ENCODE measurements at regions of chr14 and their contacts with region 1.

Region 1: GRCh38 chr14:35292051-35292769 is at the start of gene PSMA6:
- DNase-seq: peak; percentile 100
- ATAC-seq: peak; percentile 93
- H3K4me3 ChIP-seq: peak within 1 kb of the TSS; percentile 90
- H3K27ac ChIP-seq: peak within 1 kb of the TSS; percentile 74
- H3K4me1 ChIP-seq: peaks cover 9% of the 10 kb centered on the region; the same call in 1 of the 2 replicates
- H3K27me3 ChIP-seq: no peaks in the 10 kb centered on the region
- CTCF ChIP-seq: no peak
- total RNA-seq, gene PSMA6: 307 and 308 TPM in 2 replicates

Region 2: DNA sequence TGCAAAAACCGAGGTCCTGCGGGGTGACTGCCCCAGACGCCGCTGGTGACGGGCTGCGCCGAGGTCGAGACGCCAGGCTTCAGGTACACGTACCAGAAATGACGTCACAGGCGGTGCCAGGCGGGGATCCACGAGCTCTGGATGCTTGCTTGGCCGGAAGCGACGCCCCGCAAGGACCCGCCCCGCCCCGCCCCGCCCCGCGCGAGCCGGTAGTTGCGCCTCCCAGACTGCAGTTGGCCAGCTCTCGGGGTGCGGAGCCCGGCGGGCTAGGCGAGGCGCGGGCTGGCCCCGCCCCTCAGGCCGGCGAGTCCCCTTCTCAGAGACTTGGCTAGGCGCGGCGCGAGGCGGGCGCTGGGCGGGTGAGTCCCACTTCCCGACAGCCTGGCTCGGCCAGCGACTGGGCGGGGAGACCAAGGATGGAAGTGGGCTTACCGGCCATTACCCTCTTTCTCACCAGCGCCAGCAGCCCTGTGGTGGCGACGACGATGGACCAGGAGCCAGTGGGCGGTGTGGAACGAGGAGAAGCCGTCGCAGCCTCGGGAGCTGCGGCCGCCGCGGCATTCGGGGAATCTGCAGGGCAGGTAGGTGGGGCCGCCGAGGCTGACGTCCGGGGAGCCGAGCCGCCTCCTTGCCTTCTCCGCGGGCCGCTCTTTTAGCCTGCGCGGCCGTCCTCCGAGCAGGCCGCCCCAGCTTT is 246.0 kb before region 1 on chr14 and contains the start of gene FAM177A1:
- CTCF ChIA-PET with region 1: no interaction called
- POLR2A ChIA-PET with region 1: interaction called, 20 read pairs
- intact Hi-C with region 1: no loop called
- DNase-seq: peak; percentile 96
- ATAC-seq: peak; percentile 87
- H3K4me3 ChIP-seq: peak within 1 kb of the TSS; percentile 87
- H3K27ac ChIP-seq: peak within 1 kb of the TSS; percentile 75
- H3K4me1 ChIP-seq: peaks cover 32% of the 10 kb centered on the region
- H3K27me3 ChIP-seq: no peaks in the 10 kb centered on the region
- CTCF ChIP-seq: no peak
- total RNA-seq, gene FAM177A1: 36.2 and 62.8 TPM in 2 replicates

Region 3: GRCh38 chr14:35159742-35160409 is 132.3 kb before region 1 on chr14:
- CTCF ChIA-PET with region 1: no interaction called
- POLR2A ChIA-PET with region 1: interaction called, 8 read pairs
- intact Hi-C with region 1: loop called (anchors 5 kb)
- DNase-seq: peak; percentile 97
- ATAC-seq: peak; percentile 99
- H3K4me3 ChIP-seq: peak overlapping the region; percentile 49
- H3K27ac ChIP-seq: peak overlapping the region; percentile 95
- H3K4me1 ChIP-seq: peaks cover 42% of the 10 kb centered on the region
- H3K27me3 ChIP-seq: no peaks in the 10 kb centered on the region
- CTCF ChIP-seq: no peak

Region 4: GRCh38 chr14:35229495-35230089 is 62.6 kb before region 1 on chr14:
- CTCF ChIA-PET with region 1: no interaction called
- POLR2A ChIA-PET with region 1: interaction called, 8 read pairs
- intact Hi-C with region 1: loop called (anchors 1 kb)
- DNase-seq: peak; percentile 61
- ATAC-seq: peak; percentile 84
- H3K4me3 ChIP-seq: no peak overlapping the region
- H3K27ac ChIP-seq: no peak overlapping the region
- H3K4me1 ChIP-seq: no peaks in the 10 kb centered on the region
- H3K27me3 ChIP-seq: no peaks in the 10 kb centered on the region
- CTCF ChIP-seq: peak; percentile 75

Region 5: GRCh38 chr14:35331605-35332516 is 39.7 kb after region 1 on chr14:
- CTCF ChIA-PET with region 1: no interaction called
- POLR2A ChIA-PET with region 1: no interaction called
- intact Hi-C with region 1: loop called (anchors 2 kb)
- DNase-seq: peak; percentile 93
- ATAC-seq: peak; percentile 68
- H3K4me3 ChIP-seq: 0 out of 2 replicates have a peak overlapping the region, but pooled peaks have one; percentile 14
- H3K27ac ChIP-seq: peak overlapping the region; percentile 76
- H3K4me1 ChIP-seq: peaks cover 44% of the 10 kb centered on the region
- H3K27me3 ChIP-seq: no peaks in the 10 kb centered on the region
- CTCF ChIP-seq: no peak

Region 6: DNA sequence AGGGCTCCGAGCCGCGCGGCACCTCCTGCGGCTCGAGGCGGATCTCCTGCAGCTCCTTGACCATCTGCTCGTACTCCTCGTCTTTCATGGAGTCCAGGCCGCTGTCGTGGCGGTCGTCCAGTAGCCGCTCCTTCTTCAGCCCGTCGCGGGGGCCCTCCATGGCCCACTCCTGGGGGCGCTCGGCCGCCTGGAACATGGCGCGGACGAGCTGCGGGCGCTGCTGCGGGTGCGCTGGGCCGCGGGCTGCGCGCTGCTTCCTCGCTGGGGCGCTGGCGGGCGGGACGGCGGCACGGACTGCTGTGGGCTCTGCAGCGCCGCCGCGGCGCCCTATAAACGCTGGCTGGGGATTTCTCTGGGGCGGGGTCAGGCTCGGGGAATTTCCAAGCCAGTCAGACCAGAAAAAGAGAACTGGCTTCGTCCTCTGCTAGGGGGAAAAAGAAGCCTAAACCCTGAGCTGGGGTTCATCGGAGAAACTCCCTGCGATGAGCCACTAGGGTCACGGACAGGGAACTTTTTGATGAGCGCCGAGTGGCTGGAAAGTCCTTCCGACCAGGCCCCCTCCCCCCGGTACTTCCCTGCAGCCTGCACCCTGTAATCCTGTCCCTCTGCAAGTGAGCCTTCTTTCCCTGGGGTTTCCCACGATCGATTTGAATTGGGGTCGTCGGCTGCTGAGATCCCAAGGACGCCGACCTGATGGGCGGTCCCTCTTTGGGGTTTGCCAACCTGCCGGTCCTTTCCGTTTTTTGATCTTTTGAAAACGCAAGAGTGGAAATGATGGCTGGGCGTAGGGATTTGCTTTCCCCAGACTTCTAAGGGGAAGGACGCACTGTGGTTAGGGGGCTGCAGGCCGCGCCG is 112.5 kb after region 1 on chr14 and contains the start of gene NFKBIA:
- CTCF ChIA-PET with region 1: interaction called, 3 read pairs
- POLR2A ChIA-PET with region 1: interaction called, 143 read pairs
- intact Hi-C with region 1: loop called (anchors 1 kb)
- DNase-seq: peak; percentile 90
- ATAC-seq: peak; percentile 73
- H3K4me3 ChIP-seq: peak within 1 kb of the TSS; percentile 92
- H3K27ac ChIP-seq: peak within 1 kb of the TSS; percentile 91
- H3K4me1 ChIP-seq: peaks cover 34% of the 10 kb centered on the region
- H3K27me3 ChIP-seq: no peaks in the 10 kb centered on the region
- CTCF ChIP-seq: peak; percentile 55
- total RNA-seq, gene NFKBIA: 186 and 226 TPM in 2 replicates

Region 7: GRCh38 chr14:36254020-36254624 is 961.9 kb after region 1 on chr14:
- CTCF ChIA-PET with region 1: no interaction called
- POLR2A ChIA-PET with region 1: interaction called, 17 read pairs
- intact Hi-C with region 1: no loop called
- DNase-seq: peak; percentile 25
- ATAC-seq: 0 out of 2 replicates have a peak, but pooled peaks have one; percentile 27
- H3K4me3 ChIP-seq: no peak overlapping the region
- H3K27ac ChIP-seq: no peak overlapping the region
- H3K4me1 ChIP-seq: no peaks in the 10 kb centered on the region
- H3K27me3 ChIP-seq: peaks cover 64% of the 10 kb centered on the region
- CTCF ChIP-seq: peak; percentile 40

Measured in PC-3 (cell line).